ENCODE measurements at regions of chr3 and their contacts with region 1.

Region 1: DNA sequence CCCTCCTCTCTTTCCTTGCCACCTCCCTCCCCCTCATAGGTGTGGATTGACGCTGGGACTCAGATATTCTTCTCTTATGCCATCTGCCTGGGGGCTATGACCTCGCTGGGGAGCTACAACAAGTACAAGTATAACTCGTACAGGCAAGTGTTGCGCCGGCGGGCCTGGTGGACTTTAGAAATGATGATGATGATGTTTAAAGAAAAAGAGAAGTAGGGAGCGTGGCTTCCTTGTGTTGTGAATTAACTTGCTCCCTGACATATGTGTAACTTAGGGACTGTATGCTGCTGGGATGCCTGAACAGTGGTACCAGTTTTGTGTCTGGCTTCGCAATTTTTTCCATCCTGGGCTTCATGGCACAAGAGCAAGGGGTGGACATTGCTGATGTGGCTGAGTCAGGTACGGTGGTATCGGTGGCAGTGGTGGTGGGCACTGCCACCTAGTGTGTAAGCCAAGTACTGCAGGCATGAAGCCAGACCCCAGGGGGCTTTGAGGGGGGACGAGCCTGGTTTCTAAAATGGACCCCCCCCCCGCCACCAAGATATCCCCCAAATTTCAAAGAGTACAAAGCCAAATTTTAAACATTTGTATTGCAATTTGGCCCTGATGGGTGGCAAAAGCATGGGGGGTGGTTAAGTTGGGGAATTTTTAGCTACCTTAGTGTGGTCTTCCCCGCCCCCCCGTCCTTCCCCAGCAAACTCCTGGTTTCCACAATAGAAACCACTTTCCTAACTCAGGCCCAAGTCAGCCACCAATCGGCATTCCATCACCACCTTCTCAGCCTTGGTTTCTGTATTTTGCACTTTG is 65.6 kb downstream of the SLC6A6 start:
- DNase-seq: no peak
- H3K4me3 ChIP-seq: no peak overlapping the region
- H3K27ac ChIP-seq: no peak overlapping the region
- H3K4me1 ChIP-seq: peaks cover 8% of the 10 kb centered on the region
- H3K27me3 ChIP-seq: no peaks in the 10 kb centered on the region
- CTCF ChIP-seq: peak; percentile 85 to 93 (median 91)
- POLR2A ChIP-seq: no peak

Region 2: DNA sequence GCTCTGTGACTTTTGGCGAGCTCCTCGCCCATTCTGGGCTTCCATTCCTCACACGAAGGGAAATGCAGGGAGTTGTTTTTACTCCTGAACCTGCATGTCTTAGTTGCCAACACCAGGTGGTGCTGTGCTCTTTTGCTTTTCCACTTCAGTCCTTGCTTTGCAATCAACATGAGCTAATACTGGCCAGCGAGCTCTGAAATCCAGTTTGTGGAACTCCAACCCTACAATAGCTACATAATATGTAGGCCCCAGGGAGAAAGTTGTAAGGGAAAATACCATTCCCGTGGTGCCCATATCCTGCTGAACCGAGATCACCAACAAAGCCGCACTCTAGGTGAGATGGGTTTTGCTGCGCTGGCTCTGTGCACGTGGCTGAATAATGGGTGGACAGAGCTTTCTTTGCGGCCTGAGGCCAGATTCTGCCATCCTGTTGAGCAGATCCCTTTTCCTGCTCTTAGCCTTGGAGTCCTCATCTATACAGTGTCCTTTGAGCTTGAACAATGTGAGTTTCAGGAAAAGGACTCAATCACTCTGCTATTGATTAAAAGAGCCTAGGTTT is 264.4 kb before region 1 on chr3:
- intact Hi-C with region 1: loop called (anchors 5 kb)
- DNase-seq: no peak
- H3K4me3 ChIP-seq: no peak overlapping the region
- H3K27ac ChIP-seq: no peak overlapping the region
- H3K4me1 ChIP-seq: peaks cover 24% of the 10 kb centered on the region
- H3K27me3 ChIP-seq: no peaks in the 10 kb centered on the region
- CTCF ChIP-seq: peak; percentile 79 to 85 (median 84)
- POLR2A ChIP-seq: no peak

Region 3: DNA sequence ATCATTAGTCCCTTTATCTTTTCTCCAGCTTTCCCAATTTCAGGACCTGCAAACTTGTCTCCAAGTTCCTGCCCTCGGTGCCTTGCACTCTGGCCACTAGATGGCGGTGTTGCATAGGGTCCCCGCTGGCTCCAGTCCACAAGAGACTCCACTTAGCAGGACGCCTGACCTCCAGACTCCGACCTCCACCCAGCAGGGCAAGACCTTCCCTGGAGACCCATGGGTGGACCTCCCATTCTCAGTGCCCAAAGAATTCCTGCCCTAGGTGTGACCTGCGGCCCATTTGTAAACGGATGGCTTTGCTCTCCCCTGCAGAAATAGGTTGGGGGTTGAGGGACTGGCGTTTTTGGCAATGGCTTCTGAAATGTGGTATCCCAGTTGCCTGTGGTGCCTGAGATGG is 206.8 kb before region 1 on chr3:
- intact Hi-C with region 1: loop called (anchors 5 kb)
- DNase-seq: no peak
- H3K4me3 ChIP-seq: no peak overlapping the region
- H3K27ac ChIP-seq: no peak overlapping the region
- H3K4me1 ChIP-seq: peaks cover 5% of the 10 kb centered on the region
- H3K27me3 ChIP-seq: no peaks in the 10 kb centered on the region
- CTCF ChIP-seq: peak; percentile 90 to 97 (median 90)
- POLR2A ChIP-seq: no peak